ENCODE measurements at regions of chr2 and their contacts with region 1.

Region 1: GRCh38 chr2:171939743-171940071 is 17.4 kb downstream of the HAT1 start:
- DNase-seq: no peak
- ATAC-seq: no peak
- H3K4me3 ChIP-seq: no peak overlapping the region
- H3K4me3 Mint-ChIP-seq: no peak overlapping the region
- H3K27ac ChIP-seq: no peak overlapping the region
- H3K27ac Mint-ChIP-seq: no peak overlapping the region
- H3K4me1 ChIP-seq: no peaks in the 10 kb centered on the region
- H3K4me1 Mint-ChIP-seq: peaks cover 30 to 49% (median 34%) of the 10 kb centered on the region in 3 donors
- H3K27me3 ChIP-seq: no peaks in the 10 kb centered on the region
- H3K27me3 Mint-ChIP-seq: no peaks in the 10 kb centered on the region

Region 2: DNA sequence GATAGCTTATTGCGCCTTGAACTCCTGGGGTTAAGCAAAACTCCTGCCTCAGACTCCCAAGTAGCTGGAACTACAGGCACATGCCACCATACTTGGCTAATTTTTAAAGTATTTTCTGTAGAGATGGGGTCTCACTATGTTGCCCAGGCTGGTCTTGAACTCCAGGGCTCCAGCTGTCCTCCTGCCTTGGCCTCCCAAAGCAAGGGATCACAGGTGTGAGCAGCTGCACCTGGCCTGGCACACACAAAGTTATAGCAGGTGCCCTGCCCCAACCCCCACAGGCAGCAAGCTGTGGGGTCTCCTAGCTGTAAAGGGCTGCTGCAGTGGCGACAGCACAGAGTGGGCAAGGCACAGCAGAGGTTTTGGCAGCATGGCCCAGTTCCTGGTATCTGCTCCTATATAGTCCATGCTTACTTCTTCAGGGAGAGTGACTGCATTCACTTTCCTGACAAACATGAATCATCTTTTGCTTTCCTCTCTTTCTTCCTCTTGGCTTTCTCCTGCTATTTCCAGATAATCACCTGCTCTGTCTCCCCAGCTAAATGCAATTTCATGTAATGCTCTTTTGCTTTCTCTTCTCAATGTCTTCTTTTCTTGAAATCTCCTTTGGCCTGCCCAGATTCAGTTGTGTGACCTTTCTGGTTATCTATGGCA is 32.7 kb after region 1 on chr2:
- CTCF ChIA-PET with region 1: interaction called in 1 of 2 experiments, 10 read pairs
- POLR2A ChIA-PET with region 1: no interaction called
- DNase-seq: no peak
- ATAC-seq: no peak
- H3K4me3 ChIP-seq: no peak overlapping the region
- H3K4me3 Mint-ChIP-seq: no peak overlapping the region
- H3K27ac ChIP-seq: no peak overlapping the region
- H3K27ac Mint-ChIP-seq: no peak overlapping the region
- H3K4me1 ChIP-seq: no peaks in the 10 kb centered on the region
- H3K4me1 Mint-ChIP-seq: no peaks in the 10 kb centered on the region
- H3K27me3 ChIP-seq: no peaks in the 10 kb centered on the region
- H3K27me3 Mint-ChIP-seq: no peaks in the 10 kb centered on the region

Region 3: DNA sequence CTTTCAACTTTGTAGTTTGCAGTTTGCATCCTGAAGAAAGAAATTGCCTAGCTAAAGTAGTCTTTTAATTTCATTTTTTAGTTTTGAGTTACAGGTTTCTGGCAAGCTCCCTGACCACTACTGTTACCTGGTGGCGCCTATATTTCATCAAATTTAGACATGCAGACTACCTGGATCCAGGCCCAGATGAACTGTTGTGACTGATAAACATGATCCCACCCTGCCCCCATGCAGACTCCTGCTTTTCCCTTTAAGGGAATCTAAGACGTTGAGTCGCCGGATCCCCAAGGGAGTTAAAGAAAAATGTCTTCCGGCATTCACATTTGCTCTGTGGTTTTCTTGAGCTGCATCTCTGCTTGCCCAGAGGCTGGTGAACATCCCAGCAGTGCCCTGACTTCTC is 82.2 kb after region 1 on chr2:
- CTCF ChIA-PET with region 1: no interaction called
- POLR2A ChIA-PET with region 1: no interaction called
- DNase-seq: no peak
- ATAC-seq: no peak
- H3K4me3 ChIP-seq: no peak overlapping the region
- H3K4me3 Mint-ChIP-seq: no peak overlapping the region
- H3K27ac ChIP-seq: no peak overlapping the region
- H3K27ac Mint-ChIP-seq: no peak overlapping the region
- H3K4me1 ChIP-seq: no peaks in the 10 kb centered on the region
- H3K4me1 Mint-ChIP-seq: no peaks in the 10 kb centered on the region
- H3K27me3 ChIP-seq: no peaks in the 10 kb centered on the region
- H3K27me3 Mint-ChIP-seq: no peaks in the 10 kb centered on the region

Region 4: DNA sequence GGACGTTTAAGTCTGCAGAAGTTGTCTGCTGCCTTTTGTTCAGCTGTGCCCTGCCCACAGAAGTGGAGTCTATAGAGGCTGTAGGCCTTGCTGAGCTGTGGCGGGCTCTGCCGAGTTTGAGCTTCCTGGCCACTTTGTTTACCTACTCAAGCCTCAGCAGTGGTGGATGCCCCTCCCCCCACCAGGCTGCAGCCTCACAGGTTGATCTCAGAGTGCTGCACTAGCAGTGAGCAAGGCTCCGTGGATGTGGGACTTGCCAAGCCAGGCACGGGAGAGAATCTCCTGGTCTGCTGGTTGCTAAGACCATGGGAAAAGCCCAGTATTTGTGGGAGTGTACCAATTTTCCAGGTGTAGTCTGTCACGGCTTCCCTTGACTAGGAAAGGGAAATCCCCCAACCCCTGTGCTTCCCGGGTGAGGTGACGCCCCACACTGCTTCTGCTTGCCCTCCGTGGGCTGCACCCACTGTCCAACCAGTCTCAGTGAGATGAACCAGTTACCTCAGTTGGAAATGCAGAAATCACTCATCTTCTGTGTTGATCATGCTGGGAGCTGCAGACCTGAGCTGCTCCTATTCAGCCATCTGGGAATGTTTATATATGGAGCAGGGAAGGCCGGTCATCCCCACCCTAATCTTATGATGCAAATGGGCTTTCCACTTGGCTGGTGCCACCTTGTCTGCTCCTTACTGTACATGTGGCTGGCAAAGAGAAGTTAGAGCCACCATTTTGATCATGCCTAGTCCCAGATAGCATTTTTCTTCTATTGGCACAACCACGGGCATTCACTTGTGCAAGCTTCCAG is 330.8 kb after region 1 on chr2:
- CTCF ChIA-PET with region 1: no interaction called
- POLR2A ChIA-PET with region 1: no interaction called
- DNase-seq: peak in 33 of 35 experiments; percentile 5 to 64 (median 30)
- ATAC-seq: peak in 3 of 4 experiments; percentile 57 to 62 (median 61)
- H3K4me3 ChIP-seq: no peak overlapping the region
- H3K4me3 Mint-ChIP-seq: peak overlapping the region in 1 of 3 donors; percentile 36
- H3K27ac ChIP-seq: no peak overlapping the region
- H3K27ac Mint-ChIP-seq: peak overlapping the region in 1 of 2 donors; percentile 62
- H3K4me1 ChIP-seq: peaks cover 7 to 19% of the 10 kb centered on the region in 2 experiments
- H3K4me1 Mint-ChIP-seq: peaks cover 19 to 29% (median 28%) of the 10 kb centered on the region in 3 donors
- H3K27me3 ChIP-seq: peaks cover 0 to 6% of the 10 kb centered on the region in 2 experiments
- H3K27me3 Mint-ChIP-seq: peaks cover 0 to 4% of the 10 kb centered on the region in 2 donors